HepG2 (cell line): ENCODE measurements at regions of chr13 and their contacts with region 1.

Region 1: DNA sequence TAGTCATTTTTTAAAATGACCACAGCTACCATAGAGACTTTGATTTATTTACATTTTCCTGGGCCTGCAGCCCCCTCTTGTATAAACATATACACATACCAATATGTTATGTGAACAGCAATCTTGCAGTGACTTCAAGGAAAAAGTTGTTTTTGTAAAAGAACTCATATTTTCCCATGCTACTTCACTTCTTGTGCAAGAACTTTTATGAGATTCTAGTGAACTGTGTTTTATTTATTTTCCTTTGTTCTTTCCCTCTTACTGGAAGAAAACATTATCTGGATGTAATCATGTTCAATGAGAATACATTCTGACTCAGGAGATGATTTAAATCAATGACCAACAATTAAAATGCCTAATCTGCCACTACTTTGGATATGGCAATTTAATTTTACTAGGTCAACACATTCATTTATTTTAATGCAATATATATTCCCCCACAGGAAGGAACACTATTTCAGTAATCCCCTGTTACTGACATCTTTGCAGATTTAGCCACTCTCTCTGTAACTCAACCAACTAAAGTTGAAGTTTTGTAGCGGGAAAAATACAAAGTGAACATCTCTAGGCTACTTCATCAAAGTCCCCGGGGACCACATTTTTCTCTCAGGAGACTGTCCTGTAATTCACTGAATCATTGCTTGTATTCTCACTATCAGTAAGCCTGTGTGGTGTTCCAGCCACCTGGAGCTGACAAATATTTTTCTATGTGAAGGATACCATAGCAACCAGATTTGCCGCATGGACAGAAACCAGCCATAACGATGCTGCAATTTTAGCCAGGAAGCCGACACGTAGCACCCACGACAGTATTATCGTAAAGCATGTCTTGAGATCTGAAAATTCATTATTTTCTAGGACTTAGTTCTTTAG is 90.5 kb downstream of the STARD13 start:
- DNase-seq: peak; percentile 73
- ATAC-seq: peak; percentile 70
- H3K4me3 ChIP-seq: no peak overlapping the region; a peak in 1 of 6 replicates
- H3K27ac ChIP-seq: peak overlapping the region; percentile 56
- H3K4me1 ChIP-seq: peaks cover 49% of the 10 kb centered on the region
- H3K27me3 ChIP-seq: no peaks in the 10 kb centered on the region
- CTCF ChIP-seq: no peak
- EP300 ChIP-seq: peak in 1 of 2 experiments; percentile 52; a peak in 1 of 4 replicates
- POLR2A ChIP-seq: no peak
- RAD21 ChIP-seq: no peak

Region 2: DNA sequence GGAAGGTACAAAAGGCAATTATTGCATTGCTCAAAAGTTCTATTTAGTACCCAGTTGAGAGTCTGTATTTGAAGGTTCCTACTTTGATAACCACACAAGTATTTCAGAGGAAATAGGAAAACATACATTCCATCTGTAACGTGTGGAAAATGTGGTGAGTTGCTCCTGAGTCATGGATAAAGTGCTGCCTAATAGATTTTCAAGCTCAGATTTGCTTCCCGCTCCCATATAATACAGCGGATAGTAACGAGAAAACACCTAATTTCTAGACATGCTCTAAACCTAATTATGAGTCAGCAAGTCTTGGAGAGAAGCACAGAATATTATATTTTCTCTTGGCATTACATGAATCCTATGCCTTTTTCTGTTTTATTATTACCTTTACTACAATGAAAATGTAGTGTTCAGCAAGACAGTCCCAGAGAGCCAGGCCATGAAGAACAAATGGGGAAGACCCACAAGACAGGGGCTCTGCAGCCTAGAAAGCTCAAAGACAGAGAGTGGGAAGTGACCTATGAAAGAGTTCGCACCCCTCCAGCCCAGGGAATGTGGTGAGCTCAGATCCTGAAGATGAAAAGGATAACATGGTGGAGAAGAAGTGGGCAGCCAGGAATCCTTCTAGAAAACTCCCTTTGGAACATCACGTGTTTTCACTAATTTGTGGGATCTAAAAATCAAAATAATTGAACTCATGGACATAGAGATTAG is 25.6 kb before region 1 on chr13:
- CTCF ChIA-PET with region 1: no interaction called
- POLR2A ChIA-PET with region 1: interaction called, 6 read pairs
- in situ Hi-C with region 1: no loop called
- intact Hi-C with region 1: loop called (anchors 2 kb)
- DNase-seq: no peak
- ATAC-seq: no peak; the same call in 2 of the 3 replicates
- H3K4me3 ChIP-seq: peak overlapping the region in 1 of 3 experiments; percentile 30; a peak in 1 of 6 replicates
- H3K27ac ChIP-seq: peak overlapping the region; percentile 85
- H3K4me1 ChIP-seq: peaks cover 65% of the 10 kb centered on the region
- H3K27me3 ChIP-seq: no peaks in the 10 kb centered on the region
- CTCF ChIP-seq: no peak
- EP300 ChIP-seq: no peak
- POLR2A ChIP-seq: no peak
- RAD21 ChIP-seq: no peak

Region 3: GRCh38 chr13:33212396-33212795 is 17.3 kb after region 1 on chr13:
- CTCF ChIA-PET with region 1: no interaction called
- POLR2A ChIA-PET with region 1: no interaction called
- in situ Hi-C with region 1: no loop called
- intact Hi-C with region 1: no loop called
- DNase-seq: no peak
- ATAC-seq: no peak
- H3K4me3 ChIP-seq: no peak overlapping the region
- H3K27ac ChIP-seq: no peak overlapping the region
- H3K4me1 ChIP-seq: peaks cover 45% of the 10 kb centered on the region
- H3K27me3 ChIP-seq: no peaks in the 10 kb centered on the region
- CTCF ChIP-seq: no peak
- EP300 ChIP-seq: no peak
- POLR2A ChIP-seq: no peak
- RAD21 ChIP-seq: no peak